ENCODE measurements at regions of chr12 and their contacts with region 1.

Region 1: DNA sequence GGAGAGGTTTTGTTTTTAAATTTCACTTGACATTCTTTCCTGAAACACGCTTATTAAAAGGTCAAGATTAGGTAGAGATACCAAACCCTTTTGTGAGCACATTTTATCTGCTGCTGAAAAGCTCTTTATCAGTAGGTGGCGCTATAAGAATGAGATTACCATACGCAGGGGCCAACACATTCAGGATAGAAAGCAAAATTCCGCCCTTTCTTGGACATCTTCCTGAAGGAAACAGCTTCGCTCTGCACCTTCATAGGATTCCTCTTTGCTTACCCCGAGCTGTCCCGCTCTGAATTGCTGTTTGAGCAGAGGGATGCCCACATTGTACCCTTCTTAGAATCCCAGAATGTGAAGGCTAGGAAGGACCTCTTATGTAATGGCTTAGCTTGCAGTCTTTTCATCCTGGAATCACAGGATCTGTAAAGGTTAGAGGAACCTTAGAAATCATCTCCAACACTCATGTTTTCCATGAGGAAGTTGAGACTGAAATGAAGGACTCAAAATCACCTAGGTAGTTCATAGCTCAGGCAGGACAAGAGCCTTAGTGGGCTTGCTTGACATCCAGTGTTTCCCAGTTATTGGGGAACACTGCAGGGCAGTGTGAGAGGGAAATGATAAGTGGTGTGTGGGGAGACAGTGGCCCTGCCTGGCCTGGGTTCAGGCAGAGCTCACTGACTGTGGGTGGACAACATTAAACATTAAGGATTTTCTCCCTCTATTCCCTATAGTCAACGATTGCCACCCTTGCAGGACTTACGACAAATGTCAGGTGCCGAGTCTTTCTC is 38.7 kb upstream of the CRY1 start:
- DNase-seq: peak; percentile 29 to 57
- H3K4me3 ChIP-seq: no peak overlapping the region
- H3K27ac ChIP-seq: no peak overlapping the region
- H3K4me1 ChIP-seq: no peaks in the 10 kb centered on the region; the same call in 1 of the 2 replicates
- H3K27me3 ChIP-seq: no peaks in the 10 kb centered on the region
- CTCF ChIP-seq: peak; percentile 91

Region 2: DNA sequence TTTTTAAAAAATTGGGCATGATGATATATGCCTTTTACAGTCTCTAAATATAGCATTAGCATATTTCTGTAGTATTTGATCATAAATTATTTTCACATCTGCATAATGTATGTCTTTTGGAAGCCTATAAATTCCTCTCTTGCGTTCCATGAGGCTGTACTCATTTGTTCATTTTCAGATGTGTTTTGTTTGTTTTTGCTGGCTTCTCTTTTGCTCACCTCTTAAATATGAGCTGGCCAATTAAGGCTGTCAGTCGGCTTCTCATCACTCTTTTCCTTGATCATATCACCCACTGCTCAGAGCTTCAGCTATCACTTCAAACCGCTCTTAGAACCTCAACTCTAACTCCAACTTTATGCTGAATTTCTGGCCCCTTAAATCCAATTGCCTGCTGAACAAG is 169.7 kb before region 1 on chr12:
- CTCF ChIA-PET with region 1: no interaction called
- POLR2A ChIA-PET with region 1: no interaction called
- intact Hi-C with region 1: no loop called
- DNase-seq: no peak
- H3K4me3 ChIP-seq: no peak overlapping the region
- H3K27ac ChIP-seq: no peak overlapping the region
- H3K4me1 ChIP-seq: peaks cover 17% of the 10 kb centered on the region; the same call in 1 of the 2 replicates
- H3K27me3 ChIP-seq: no peaks in the 10 kb centered on the region
- CTCF ChIP-seq: no peak

Region 3: DNA sequence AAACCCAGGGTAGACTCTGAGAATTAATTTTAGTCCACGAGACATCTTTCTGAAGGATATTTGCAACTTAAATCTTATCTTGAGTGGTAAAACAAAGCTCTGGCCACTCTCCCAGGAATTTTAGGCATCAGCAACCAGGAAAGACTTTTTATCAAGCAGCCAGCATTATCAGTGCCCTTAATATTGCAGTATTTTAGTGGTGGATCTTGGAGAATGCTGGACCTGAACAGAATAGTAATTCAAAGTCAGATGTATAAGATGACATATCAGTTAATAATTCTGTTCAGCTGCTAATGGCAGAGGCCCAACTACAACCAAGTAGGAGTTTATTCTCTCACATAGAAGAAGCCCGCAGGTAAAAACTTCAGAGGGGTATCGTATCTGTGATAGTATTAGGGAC is 20.3 kb after region 1 on chr12:
- CTCF ChIA-PET with region 1: no interaction called
- POLR2A ChIA-PET with region 1: no interaction called
- intact Hi-C with region 1: no loop called
- DNase-seq: no peak
- H3K4me3 ChIP-seq: no peak overlapping the region
- H3K27ac ChIP-seq: no peak overlapping the region
- H3K4me1 ChIP-seq: no peaks in the 10 kb centered on the region
- H3K27me3 ChIP-seq: no peaks in the 10 kb centered on the region
- CTCF ChIP-seq: no peak

Region 4: GRCh38 chr12:107317751-107318613 is 186.0 kb after region 1 on chr12:
- CTCF ChIA-PET with region 1: no interaction called
- POLR2A ChIA-PET with region 1: no interaction called
- intact Hi-C with region 1: loop called (anchors 1 kb)
- DNase-seq: peak; percentile 85 to 92
- H3K4me3 ChIP-seq: peak overlapping the region; percentile 65
- H3K27ac ChIP-seq: peak overlapping the region; percentile 41
- H3K4me1 ChIP-seq: peaks cover 9% of the 10 kb centered on the region
- H3K27me3 ChIP-seq: no peaks in the 10 kb centered on the region
- CTCF ChIP-seq: peak; percentile 66; the same call in 1 of the 2 replicates

Region 5: DNA sequence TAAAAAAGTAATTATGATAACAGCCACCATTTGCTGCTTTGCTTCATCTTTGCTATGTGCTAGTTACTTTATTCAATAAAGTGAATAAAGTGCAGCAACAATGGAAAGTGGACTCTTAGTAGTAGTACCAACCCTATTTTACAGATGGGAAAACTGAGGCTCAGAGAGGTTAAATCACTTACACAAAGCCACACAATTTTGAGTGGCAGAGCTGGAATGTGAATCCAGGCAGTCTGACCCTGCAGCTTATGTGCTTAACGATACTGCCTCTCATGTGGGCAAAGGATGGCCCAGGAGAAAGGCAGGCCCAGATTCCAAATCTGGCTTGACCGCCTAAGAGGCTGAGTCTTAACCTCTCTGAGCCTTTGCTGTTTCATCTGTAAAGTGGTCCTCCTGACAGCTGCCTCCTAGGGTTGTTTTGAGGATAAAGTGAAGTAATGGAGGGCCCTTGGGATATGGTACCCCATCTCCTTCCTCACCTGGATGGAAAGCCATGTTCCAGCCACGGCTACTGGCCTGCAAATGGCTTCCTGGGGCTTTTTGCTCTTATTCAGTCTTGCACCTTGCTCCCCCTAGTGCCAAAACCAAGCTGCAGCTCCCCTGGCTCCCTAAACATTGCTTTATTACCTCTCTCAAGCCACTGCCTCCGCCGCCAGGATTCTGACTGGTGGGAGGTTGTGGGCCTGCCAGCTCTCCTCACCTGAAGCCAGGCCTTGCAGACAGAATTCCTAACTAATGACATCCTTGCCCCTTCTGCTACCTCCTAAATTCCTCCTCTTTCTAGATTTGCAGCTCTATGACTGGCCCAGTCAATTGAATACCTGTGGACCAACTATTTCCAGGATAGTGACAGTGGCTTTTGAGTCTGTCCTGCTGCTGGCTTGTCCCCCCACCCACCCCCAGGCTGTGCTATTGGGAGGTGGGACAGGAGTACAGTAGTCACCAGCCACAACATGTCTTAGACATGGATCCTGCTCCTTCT is 270.3 kb after region 1 on chr12:
- CTCF ChIA-PET with region 1: interaction called, 4 read pairs
- POLR2A ChIA-PET with region 1: no interaction called
- intact Hi-C with region 1: loop called (anchors 1 kb)
- DNase-seq: peak; percentile 69 to 70
- H3K4me3 ChIP-seq: no peak overlapping the region
- H3K27ac ChIP-seq: no peak overlapping the region
- H3K4me1 ChIP-seq: peaks cover 14% of the 10 kb centered on the region
- H3K27me3 ChIP-seq: no peaks in the 10 kb centered on the region
- CTCF ChIP-seq: peak; percentile 79

Region 6: DNA sequence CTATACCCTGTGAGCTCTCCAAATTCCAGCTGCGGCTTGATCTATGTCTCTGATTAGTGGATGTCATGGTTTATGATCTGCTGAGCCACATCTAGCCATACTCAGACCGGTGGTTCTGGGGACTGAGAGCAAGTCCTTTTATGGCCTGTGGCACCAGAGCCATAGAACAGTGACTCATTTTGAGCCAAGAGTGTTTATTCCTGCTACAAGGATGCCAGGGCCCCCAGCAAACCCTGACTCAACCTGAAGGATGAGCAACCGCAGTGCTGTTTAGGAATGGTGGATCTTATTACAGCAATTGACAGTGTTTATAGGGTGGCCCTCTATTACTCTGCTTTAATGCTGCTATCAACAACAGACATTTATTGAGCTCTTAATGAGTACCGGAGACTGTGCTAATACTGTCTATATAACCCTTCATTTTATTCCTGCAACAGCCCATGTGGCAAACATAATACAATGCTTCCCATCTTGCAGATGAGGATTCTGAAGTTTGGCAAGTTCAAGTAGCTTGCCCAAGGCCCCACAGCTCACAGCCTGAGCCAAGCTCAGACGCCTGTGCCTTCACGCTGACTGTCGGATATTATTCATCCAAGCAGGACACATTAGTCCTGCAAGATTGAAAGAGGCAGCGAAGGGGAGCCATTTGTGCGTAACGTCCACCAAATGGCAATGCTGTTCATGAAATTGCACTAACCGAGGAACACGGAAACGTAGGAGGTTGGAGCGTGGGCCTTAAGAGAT is 279.9 kb after region 1 on chr12:
- CTCF ChIA-PET with region 1: no interaction called
- POLR2A ChIA-PET with region 1: no interaction called
- intact Hi-C with region 1: loop called (anchors 2 kb)
- DNase-seq: peak in 1 of 2 experiments; percentile 68
- H3K4me3 ChIP-seq: no peak overlapping the region
- H3K27ac ChIP-seq: no peak overlapping the region
- H3K4me1 ChIP-seq: peaks cover 12% of the 10 kb centered on the region
- H3K27me3 ChIP-seq: no peaks in the 10 kb centered on the region
- CTCF ChIP-seq: no peak

Region 7: GRCh38 chr12:107607464-107608392 is 475.7 kb after region 1 on chr12:
- CTCF ChIA-PET with region 1: interaction called, 8 read pairs
- POLR2A ChIA-PET with region 1: no interaction called
- intact Hi-C with region 1: loop called (anchors 1 kb)
- DNase-seq: peak; percentile 57 to 71
- H3K4me3 ChIP-seq: no peak overlapping the region
- H3K27ac ChIP-seq: no peak overlapping the region
- H3K4me1 ChIP-seq: no peaks in the 10 kb centered on the region
- H3K27me3 ChIP-seq: no peaks in the 10 kb centered on the region
- CTCF ChIP-seq: peak; percentile 96

Region 8: GRCh38 chr12:107679336-107679735 is 547.3 kb after region 1 on chr12:
- CTCF ChIA-PET with region 1: no interaction called
- POLR2A ChIA-PET with region 1: no interaction called
- intact Hi-C with region 1: loop called (anchors 5 kb)
- DNase-seq: no peak
- H3K4me3 ChIP-seq: no peak overlapping the region
- H3K27ac ChIP-seq: no peak overlapping the region
- H3K4me1 ChIP-seq: peaks cover under 1% of the 10 kb centered on the region; the same call in 1 of the 2 replicates
- H3K27me3 ChIP-seq: peaks cover 38% of the 10 kb centered on the region
- CTCF ChIP-seq: no peak

Measured in PC-9 (cell line).